Naive thymus-derived CD4-positive, alpha-beta T cell (primary cell): ENCODE measurements at regions of chr3 and their contacts with region 1.

Region 1: GRCh38 chr3:15601397-15602145 is at the starts of genes BTD and HACL1:
- DNase-seq: peak; percentile 95 to 100 (median 99)
- ATAC-seq: peak; percentile 92
- H3K4me3 ChIP-seq: peak within 1 kb of the TSS; percentile 93
- H3K4me3 Mint-ChIP-seq: peak within 1 kb of the TSS; percentile 93 to 100 (median 99)
- H3K27ac ChIP-seq: peak within 1 kb of the TSS; percentile 89
- H3K27ac Mint-ChIP-seq: peak within 1 kb of the TSS; percentile 92 to 100 (median 99)
- H3K4me1 ChIP-seq: peaks cover 25 to 31% of the 10 kb centered on the region in 2 donors
- H3K4me1 Mint-ChIP-seq: peaks cover 34 to 67% (median 62%) of the 10 kb centered on the region in 7 donors
- H3K27me3 ChIP-seq: no peaks in the 10 kb centered on the region
- H3K27me3 Mint-ChIP-seq: no peaks in the 10 kb centered on the region
- total RNA-seq, gene BTD: 6.8 to 23.3 (median 15.5) TPM
- total RNA-seq, gene HACL1: 18.7 to 41.4 (median 35.4) TPM

Region 2: GRCh38 chr3:14947886-14948555 is 653.5 kb before region 1 on chr3:
- CTCF ChIA-PET with region 1: no interaction called
- POLR2A ChIA-PET with region 1: no interaction called
- intact Hi-C with region 1: loop called in 1 of 2 experiments (anchors 1 kb)
- DNase-seq: peak; percentile 93 to 98 (median 96)
- ATAC-seq: peak; percentile 94
- H3K4me3 ChIP-seq: peak overlapping the region; percentile 93
- H3K4me3 Mint-ChIP-seq: peak overlapping the region; percentile 97 to 100 (median 98)
- H3K27ac ChIP-seq: peak overlapping the region; percentile 99
- H3K27ac Mint-ChIP-seq: peak overlapping the region; percentile 98 to 100 (median 100)
- H3K4me1 ChIP-seq: peaks cover 19 to 22% of the 10 kb centered on the region in 2 donors
- H3K4me1 Mint-ChIP-seq: peaks cover 31 to 74% (median 60%) of the 10 kb centered on the region in 7 donors
- H3K27me3 ChIP-seq: no peaks in the 10 kb centered on the region
- H3K27me3 Mint-ChIP-seq: peaks cover 0 to 2% (median 0%) of the 10 kb centered on the region in 5 donors

Region 3: DNA sequence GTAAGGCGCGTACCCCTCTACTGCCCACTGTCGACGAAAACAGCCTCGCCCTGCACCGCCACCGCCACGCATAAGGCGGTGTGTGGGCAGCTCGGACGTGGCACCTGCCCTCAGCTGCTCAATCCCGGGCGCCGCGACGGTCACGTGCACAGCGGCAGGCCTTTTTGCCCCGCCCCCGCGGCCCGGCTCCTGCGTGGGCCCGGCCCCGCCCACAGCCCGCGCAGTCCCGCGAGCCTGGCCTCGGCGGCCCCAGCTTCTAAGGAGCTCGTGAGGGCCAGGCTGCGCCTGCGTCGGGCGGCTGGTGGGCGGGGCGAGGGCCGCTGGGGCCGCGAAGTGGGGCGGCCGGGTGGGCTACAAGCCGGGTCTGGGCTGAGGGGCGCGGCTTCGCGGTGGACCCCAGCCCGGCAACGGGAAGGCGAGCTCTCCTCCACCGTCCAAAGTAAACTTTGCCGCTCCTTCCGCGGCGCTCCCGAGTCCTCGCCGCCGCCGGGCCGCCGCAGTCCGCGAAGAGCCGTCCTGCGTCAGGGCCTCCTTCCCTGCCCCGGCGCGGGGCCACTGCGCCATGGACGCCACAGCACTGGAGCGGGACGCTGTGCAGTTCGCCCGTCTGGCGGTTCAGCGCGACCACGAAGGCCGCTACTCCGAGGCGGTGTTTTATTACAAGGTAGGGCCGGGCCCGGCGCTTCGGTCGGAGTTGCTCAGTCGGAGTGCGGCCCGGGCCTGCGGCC is 395.5 kb before region 1 on chr3 and contains the start of gene CAPN7:
- CTCF ChIA-PET with region 1: interaction called, 3 read pairs
- POLR2A ChIA-PET with region 1: interaction called, 5 read pairs
- intact Hi-C with region 1: loop called (anchors 1 kb)
- DNase-seq: peak; percentile 90 to 98 (median 92)
- ATAC-seq: peak; percentile 96
- H3K4me3 ChIP-seq: peak within 1 kb of the TSS; percentile 91
- H3K4me3 Mint-ChIP-seq: peak within 1 kb of the TSS; percentile 85 to 96 (median 94)
- H3K27ac ChIP-seq: peak within 1 kb of the TSS; percentile 94
- H3K27ac Mint-ChIP-seq: peak within 1 kb of the TSS; percentile 87 to 96 (median 93)
- H3K4me1 ChIP-seq: peaks cover 11 to 15% of the 10 kb centered on the region in 2 donors
- H3K4me1 Mint-ChIP-seq: peaks cover 19 to 52% (median 36%) of the 10 kb centered on the region in 7 donors
- H3K27me3 ChIP-seq: no peaks in the 10 kb centered on the region
- H3K27me3 Mint-ChIP-seq: no peaks in the 10 kb centered on the region
- total RNA-seq, gene CAPN7: 34.4 to 104 (median 70.4) TPM

Region 4: GRCh38 chr3:15535732-15536131 is 65.8 kb before region 1 on chr3:
- CTCF ChIA-PET with region 1: no interaction called
- POLR2A ChIA-PET with region 1: no interaction called
- intact Hi-C with region 1: loop called in 1 of 2 experiments (anchors 2 kb)
- DNase-seq: peak in 2 of 9 donors; percentile 5 to 55
- ATAC-seq: no peak
- H3K4me3 ChIP-seq: no peak overlapping the region
- H3K4me3 Mint-ChIP-seq: peak overlapping the region in 9 of 10 donors; percentile 14 to 76 (median 65)
- H3K27ac ChIP-seq: no peak overlapping the region
- H3K27ac Mint-ChIP-seq: peak overlapping the region; percentile 6 to 89 (median 78)
- H3K4me1 ChIP-seq: peaks cover 32 to 34% of the 10 kb centered on the region in 2 donors
- H3K4me1 Mint-ChIP-seq: peaks cover 27 to 59% (median 44%) of the 10 kb centered on the region in 7 donors
- H3K27me3 ChIP-seq: no peaks in the 10 kb centered on the region
- H3K27me3 Mint-ChIP-seq: no peaks in the 10 kb centered on the region

Region 5: DNA sequence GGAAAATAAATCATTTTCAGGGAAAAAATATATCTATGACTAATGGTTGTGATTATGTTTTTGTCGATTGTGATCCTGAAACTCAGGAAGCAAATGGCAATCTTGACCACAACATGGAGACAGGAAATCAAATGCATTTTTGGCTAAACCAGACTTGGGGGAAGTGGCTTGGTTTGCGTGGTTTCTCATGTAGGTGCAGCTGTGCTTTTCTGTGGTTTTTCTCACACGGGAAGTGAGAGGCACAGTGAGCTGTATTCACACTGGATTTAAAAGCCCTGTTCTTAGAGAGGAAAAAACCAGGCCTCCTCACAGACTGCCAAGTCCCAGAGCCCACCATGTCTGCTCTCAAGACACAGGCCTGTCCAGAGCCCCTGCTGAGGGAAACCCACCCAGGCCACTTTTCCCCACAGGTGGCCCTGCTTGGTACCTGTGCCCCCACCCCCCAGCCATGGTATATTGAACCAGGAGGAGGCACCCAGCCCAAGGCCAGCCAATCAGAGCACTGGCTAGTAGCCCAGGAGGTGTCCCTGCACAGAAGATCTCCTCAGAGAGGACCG is 46.1 kb after region 1 on chr3:
- CTCF ChIA-PET with region 1: no interaction called
- POLR2A ChIA-PET with region 1: interaction called, 3 read pairs
- intact Hi-C with region 1: loop called in 1 of 2 experiments (anchors 1 kb)
- DNase-seq: peak in 8 of 9 donors; percentile 46 to 79 (median 72)
- ATAC-seq: peak; percentile 92
- H3K4me3 ChIP-seq: peak overlapping the region; percentile 14
- H3K4me3 Mint-ChIP-seq: peak overlapping the region; percentile 58 to 85 (median 76)
- H3K27ac ChIP-seq: peak overlapping the region; percentile 15
- H3K27ac Mint-ChIP-seq: peak overlapping the region; percentile 6 to 75 (median 51)
- H3K4me1 ChIP-seq: peaks cover 38 to 44% of the 10 kb centered on the region in 2 donors
- H3K4me1 Mint-ChIP-seq: peaks cover 34 to 63% (median 57%) of the 10 kb centered on the region in 7 donors
- H3K27me3 ChIP-seq: no peaks in the 10 kb centered on the region
- H3K27me3 Mint-ChIP-seq: peaks cover 0 to 19% (median 11%) of the 10 kb centered on the region in 5 donors

Region 6: GRCh38 chr3:15859507-15860013 is 258.0 kb after region 1 on chr3:
- CTCF ChIA-PET with region 1: no interaction called
- POLR2A ChIA-PET with region 1: no interaction called
- intact Hi-C with region 1: loop called (anchors 1 kb)
- DNase-seq: peak; percentile 57 to 86 (median 71)
- ATAC-seq: peak; percentile 91
- H3K4me3 ChIP-seq: peak overlapping the region; percentile 63
- H3K4me3 Mint-ChIP-seq: peak overlapping the region; percentile 85 to 99 (median 95)
- H3K27ac ChIP-seq: peak overlapping the region; percentile 77
- H3K27ac Mint-ChIP-seq: peak overlapping the region in 6 of 9 donors; percentile 76 to 98 (median 92)
- H3K4me1 ChIP-seq: peaks cover 12 to 14% of the 10 kb centered on the region in 2 donors
- H3K4me1 Mint-ChIP-seq: peaks cover 21 to 50% (median 43%) of the 10 kb centered on the region in 7 donors
- H3K27me3 ChIP-seq: no peaks in the 10 kb centered on the region
- H3K27me3 Mint-ChIP-seq: peaks cover 0 to 10% (median 0%) of the 10 kb centered on the region in 5 donors